Adrenal gland (tissue), 19 donors: ENCODE measurements at regions of chrX and their contacts with region 1.

Region 1: GRCh38 chrX:136168929-136169735 is 21.8 kb downstream of the FHL1 start:
- DNase-seq: peak; percentile 37 to 84 (median 64)
- H3K4me3 ChIP-seq: no peak overlapping the region
- H3K27ac ChIP-seq: peak overlapping the region in 4 of 5 donors; percentile 59 to 73 (median 60)
- H3K4me1 ChIP-seq: peaks cover 4 to 16% of the 10 kb centered on the region in 2 donors
- H3K27me3 ChIP-seq: no peaks in the 10 kb centered on the region
- CTCF ChIP-seq: no peak
- POLR2A ChIP-seq: no peak

Region 2: GRCh38 chrX:134948333-134949241 is 1220.5 kb before region 1 on chrX:
- intact Hi-C with region 1: no loop called
- DNase-seq: peak; percentile 20 to 64 (median 44)
- H3K4me3 ChIP-seq: no peak overlapping the region
- H3K27ac ChIP-seq: peak overlapping the region; percentile 50 to 85 (median 68)
- H3K4me1 ChIP-seq: peaks cover 0 to 9% of the 10 kb centered on the region in 2 donors
- H3K27me3 ChIP-seq: no peaks in the 10 kb centered on the region
- CTCF ChIP-seq: no peak
- POLR2A ChIP-seq: no peak

Region 3: GRCh38 chrX:136209016-136209738 is 40.0 kb after region 1 on chrX:
- intact Hi-C with region 1: loop called in 1 of 2 experiments (anchors 5 kb)
- DNase-seq: peak; percentile 43 to 80 (median 61)
- H3K4me3 ChIP-seq: no peak overlapping the region
- H3K27ac ChIP-seq: peak overlapping the region in 1 of 5 donors; percentile 34
- H3K4me1 ChIP-seq: peaks cover 0 to 5% of the 10 kb centered on the region in 2 donors
- H3K27me3 ChIP-seq: peaks cover 11% of the 10 kb centered on the region
- CTCF ChIP-seq: peak; percentile 33 to 76 (median 61)
- POLR2A ChIP-seq: no peak

Region 4: DNA sequence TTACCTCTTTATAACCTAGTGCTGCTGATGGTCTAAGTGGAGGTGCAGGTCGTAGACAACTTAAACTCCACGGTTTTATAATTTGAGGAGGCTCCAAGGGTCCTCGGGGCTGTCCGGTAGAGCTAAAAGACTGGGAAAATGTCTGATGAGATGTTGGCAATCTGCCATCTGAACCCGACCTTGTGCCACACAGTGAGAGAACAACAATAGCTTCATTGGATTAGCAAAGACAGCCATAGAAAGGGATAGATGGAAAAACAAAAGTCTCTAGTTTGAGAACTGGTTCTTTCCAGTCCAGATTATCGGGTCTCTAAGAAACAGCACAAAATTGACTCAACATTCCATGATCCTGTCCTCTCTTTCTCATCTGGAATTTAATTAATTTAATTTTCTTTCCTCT is 510.4 kb after region 1 on chrX:
- intact Hi-C with region 1: no loop called
- DNase-seq: peak in 1 of 7 donors; percentile 8
- H3K4me3 ChIP-seq: no peak overlapping the region
- H3K27ac ChIP-seq: no peak overlapping the region
- H3K4me1 ChIP-seq: no peaks in the 10 kb centered on the region
- H3K27me3 ChIP-seq: peaks cover 4% of the 10 kb centered on the region
- CTCF ChIP-seq: no peak
- POLR2A ChIP-seq: no peak